GM10248 (cell line): ENCODE measurements at regions of chr16 and their contacts with region 1.

Region 1: GRCh38 chr16:75198135-75198600 is 8.8 kb downstream of the CTRB2 start:
- DNase-seq: no peak
- CTCF ChIP-seq: no peak

Region 2: DNA sequence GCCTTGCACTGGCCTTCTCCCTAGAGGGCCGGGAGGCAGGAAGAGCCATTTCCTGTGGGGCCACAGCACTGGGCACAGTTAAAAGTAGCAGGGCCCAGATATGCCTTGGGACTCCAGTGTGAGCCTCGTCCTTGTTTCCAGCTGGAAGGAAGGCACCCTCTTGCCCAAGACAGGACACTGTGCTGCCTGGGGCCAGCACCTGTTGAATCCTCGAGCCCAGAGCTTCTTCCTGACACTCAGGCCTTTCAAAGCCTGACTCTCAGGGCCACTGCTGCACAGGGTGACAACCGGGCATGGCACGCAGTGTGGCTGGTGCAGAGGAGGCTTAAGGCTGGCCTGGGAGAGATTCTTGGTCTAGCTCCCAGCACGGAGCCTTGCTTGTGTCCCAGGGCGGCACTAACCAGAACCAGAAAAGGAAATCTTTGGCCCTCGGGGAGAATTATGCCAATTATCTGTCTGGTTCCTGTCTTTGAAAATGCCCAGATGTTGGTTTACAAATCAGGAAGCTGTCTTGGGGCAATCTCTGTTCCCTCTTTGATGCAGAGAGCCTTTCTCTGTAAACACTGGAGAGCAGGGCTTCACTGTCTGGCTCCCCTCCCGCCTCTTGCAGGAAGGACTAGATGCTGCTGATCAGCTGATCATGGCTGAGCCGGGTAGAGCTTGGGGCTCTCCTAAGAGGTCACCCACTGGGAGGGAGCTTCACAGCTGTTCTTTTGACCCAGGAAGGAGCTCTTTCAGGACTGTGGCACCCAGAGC is 92.7 kb before region 1 on chr16:
- CTCF ChIA-PET with region 1: no interaction called
- POLR2A ChIA-PET with region 1: no interaction called
- DNase-seq: peak; percentile 27
- CTCF ChIP-seq: no peak

Region 3: DNA sequence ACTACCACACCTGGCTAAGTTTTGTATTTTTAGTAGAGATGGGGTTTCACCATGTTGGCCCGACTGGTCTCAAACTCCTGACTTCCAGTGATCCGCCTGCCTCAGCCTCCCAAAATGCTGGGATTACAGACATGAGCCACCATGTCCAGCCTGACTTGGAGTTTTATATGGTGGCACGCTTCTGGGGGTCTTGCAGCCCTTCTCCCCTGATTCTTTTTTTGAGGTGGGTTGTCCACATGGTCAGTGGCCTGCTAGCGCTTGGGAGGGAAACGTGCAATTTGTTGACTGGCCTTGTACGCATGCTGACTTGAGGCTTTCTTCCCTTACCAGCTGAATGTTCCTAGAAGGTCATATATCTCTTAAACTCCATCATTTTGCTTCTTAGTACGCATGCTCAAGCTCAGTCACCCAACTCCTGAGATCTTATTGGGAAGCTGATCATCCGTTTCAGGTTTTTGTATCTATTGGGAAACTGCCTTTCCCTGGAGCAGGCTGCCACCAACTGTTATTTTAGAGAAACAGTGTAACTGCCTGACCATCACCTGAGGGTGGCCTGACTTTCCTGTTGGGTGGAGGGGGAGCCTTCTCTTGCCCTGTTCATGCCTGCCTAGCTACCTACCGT is 67.9 kb before region 1 on chr16:
- CTCF ChIA-PET with region 1: no interaction called
- POLR2A ChIA-PET with region 1: no interaction called
- DNase-seq: no peak
- CTCF ChIP-seq: no peak

Region 4: GRCh38 chr16:75218256-75219070 is 20.3 kb after region 1 on chr16 and contains the start of gene CTRB1:
- CTCF ChIA-PET with region 1: interaction called, 86 read pairs
- POLR2A ChIA-PET with region 1: no interaction called
- DNase-seq: peak; percentile 60
- CTCF ChIP-seq: no peak

Region 5: DNA sequence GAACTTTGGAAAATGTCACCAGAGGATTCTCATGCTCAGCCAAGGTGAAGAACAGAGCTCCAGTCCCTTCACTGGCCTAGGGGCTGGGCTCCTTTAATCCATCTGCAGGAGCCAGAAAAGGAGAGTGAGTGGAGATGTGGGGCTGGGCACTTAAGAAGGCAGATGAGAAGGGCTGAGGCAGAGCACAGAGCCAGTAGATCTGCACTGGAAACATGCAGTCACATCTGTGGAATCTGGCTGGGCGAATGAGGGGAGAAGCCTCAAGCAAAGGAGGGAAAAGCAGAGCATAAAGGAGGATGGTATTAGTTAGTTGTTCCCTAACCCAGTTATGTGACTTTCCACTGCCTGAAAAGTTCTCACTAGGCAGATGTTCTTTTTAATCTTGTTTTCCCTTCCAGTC is 103.6 kb after region 1 on chr16:
- CTCF ChIA-PET with region 1: no interaction called
- POLR2A ChIA-PET with region 1: no interaction called
- DNase-seq: no peak
- CTCF ChIP-seq: no peak

Region 6: GRCh38 chr16:75379911-75380847 is 182.0 kb after region 1 on chr16:
- CTCF ChIA-PET with region 1: interaction called, 51 read pairs
- POLR2A ChIA-PET with region 1: no interaction called
- DNase-seq: peak; percentile 64
- CTCF ChIP-seq: no peak

Region 7: GRCh38 chr16:75385507-75386152 is 187.5 kb after region 1 on chr16:
- CTCF ChIA-PET with region 1: interaction called, 51 read pairs
- POLR2A ChIA-PET with region 1: no interaction called
- DNase-seq: peak; percentile 50
- CTCF ChIP-seq: peak; percentile 43

Region 8: DNA sequence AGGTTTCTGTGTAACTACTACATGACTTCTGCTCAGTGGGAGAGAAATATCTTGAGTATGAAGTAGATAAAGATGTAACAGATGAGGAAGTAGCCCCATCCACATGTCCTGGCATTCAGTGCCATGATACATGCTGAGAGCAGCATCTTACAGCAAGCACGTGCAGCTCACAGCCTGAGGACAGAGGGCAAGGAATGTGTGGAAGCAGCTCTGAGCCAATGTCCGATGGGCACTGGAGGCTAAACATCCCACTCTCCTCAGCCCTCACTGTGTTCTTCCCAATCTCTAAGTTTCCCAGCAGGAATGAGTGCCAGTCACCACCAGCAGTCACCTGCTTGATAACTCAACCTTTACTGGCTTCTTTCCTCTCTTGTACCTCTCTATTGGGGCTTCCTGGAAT is 194.7 kb after region 1 on chr16:
- CTCF ChIA-PET with region 1: interaction called, 51 read pairs
- POLR2A ChIA-PET with region 1: no interaction called
- DNase-seq: no peak
- CTCF ChIP-seq: no peak

Region 9: GRCh38 chr16:75402821-75403475 is 204.8 kb after region 1 on chr16:
- CTCF ChIA-PET with region 1: interaction called, 51 read pairs
- POLR2A ChIA-PET with region 1: no interaction called
- DNase-seq: peak; percentile 46
- CTCF ChIP-seq: peak; percentile 53

Region 10: DNA sequence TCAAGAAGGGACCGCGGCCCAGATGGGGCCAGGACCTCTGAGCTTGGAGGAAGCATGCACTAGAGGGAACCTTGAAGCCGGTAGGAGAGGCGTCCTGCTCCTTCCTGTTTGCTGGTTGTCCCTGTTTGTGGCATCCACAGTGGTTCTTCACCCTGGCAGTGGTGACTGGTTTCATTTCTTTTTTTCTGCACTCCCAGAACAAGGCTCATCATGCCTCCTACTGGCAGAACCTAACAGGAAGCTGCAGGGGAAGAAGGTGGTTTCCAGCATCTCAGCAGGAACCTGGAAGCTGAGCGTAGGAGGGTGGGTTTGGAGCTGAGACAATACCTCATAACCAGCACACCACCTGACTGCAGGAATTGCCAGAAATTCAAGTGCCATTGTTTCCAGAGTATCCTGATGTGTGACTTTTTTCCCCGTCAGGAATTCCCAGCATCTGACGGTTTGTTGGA is 352.1 kb after region 1 on chr16:
- CTCF ChIA-PET with region 1: interaction called, 11 read pairs
- POLR2A ChIA-PET with region 1: no interaction called
- DNase-seq: peak; percentile 58
- CTCF ChIP-seq: peak; percentile 64